IMR-90 (cell line): ENCODE measurements at regions of chr10 and their contacts with region 1.

Region 1: DNA sequence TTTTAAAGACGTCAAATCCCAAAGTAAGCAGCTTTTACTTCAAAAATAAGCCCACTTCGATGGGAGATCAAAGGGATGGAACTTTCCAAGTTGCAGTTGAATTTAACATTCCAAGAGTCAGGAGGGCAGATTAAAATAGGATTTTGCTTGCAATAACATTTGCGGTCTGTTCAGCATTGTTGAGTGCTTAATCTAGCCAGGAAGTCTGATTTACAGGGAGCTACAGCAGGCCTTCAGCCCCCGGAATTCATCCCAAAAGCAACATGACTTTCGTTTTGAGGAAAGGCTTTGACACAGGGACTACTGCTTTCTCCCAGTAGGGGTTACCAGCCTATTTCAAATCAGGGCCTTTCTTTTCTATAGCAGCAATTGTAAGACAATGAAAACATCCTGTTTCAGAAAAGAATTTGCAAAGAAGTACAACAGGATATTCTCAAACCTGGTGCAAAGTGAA is 279.6 kb upstream of the PITRM1 start:
- DNase-seq: peak; percentile 97
- ATAC-seq: peak; percentile 92
- H3K4me3 ChIP-seq: peak overlapping the region; percentile 17; the same call in 1 of the 2 replicates
- H3K27ac ChIP-seq: peak overlapping the region; percentile 95; the same call in 1 of the 2 replicates
- H3K4me1 ChIP-seq: peaks cover 13% of the 10 kb centered on the region
- H3K27me3 ChIP-seq: no peaks in the 10 kb centered on the region
- CTCF ChIP-seq: peak; percentile 68
- POLR2A ChIP-seq: 0 out of 2 replicates have a peak, but pooled peaks have one; percentile 37
- RAD21 ChIP-seq: peak; percentile 75

Region 2: GRCh38 chr10:3239066-3239919 is 212.9 kb before region 1 on chr10:
- CTCF ChIA-PET with region 1: no interaction called
- POLR2A ChIA-PET with region 1: no interaction called
- dilution Hi-C with region 1: no loop called
- in situ Hi-C with region 1: no loop called
- intact Hi-C with region 1: loop called (anchors 2 kb)
- DNase-seq: peak; percentile 68
- ATAC-seq: peak; percentile 94
- H3K4me3 ChIP-seq: no peak overlapping the region
- H3K27ac ChIP-seq: peak overlapping the region; percentile 77; the same call in 1 of the 2 replicates
- H3K4me1 ChIP-seq: peaks cover 9% of the 10 kb centered on the region; the same call in 1 of the 2 replicates
- H3K27me3 ChIP-seq: no peaks in the 10 kb centered on the region
- CTCF ChIP-seq: peak; percentile 91
- POLR2A ChIP-seq: 0 out of 2 replicates have a peak, but pooled peaks have one; percentile 25
- RAD21 ChIP-seq: peak; percentile 99

Region 3: GRCh38 chr10:3514691-3515090 is 62.5 kb after region 1 on chr10:
- CTCF ChIA-PET with region 1: no interaction called
- POLR2A ChIA-PET with region 1: no interaction called
- dilution Hi-C with region 1: no loop called
- in situ Hi-C with region 1: no loop called
- intact Hi-C with region 1: no loop called
- DNase-seq: no peak
- ATAC-seq: no peak
- H3K4me3 ChIP-seq: no peak overlapping the region
- H3K27ac ChIP-seq: no peak overlapping the region
- H3K4me1 ChIP-seq: no peaks in the 10 kb centered on the region
- H3K27me3 ChIP-seq: no peaks in the 10 kb centered on the region; the same call in 1 of the 2 replicates
- CTCF ChIP-seq: no peak
- POLR2A ChIP-seq: no peak
- RAD21 ChIP-seq: no peak

Region 4: DNA sequence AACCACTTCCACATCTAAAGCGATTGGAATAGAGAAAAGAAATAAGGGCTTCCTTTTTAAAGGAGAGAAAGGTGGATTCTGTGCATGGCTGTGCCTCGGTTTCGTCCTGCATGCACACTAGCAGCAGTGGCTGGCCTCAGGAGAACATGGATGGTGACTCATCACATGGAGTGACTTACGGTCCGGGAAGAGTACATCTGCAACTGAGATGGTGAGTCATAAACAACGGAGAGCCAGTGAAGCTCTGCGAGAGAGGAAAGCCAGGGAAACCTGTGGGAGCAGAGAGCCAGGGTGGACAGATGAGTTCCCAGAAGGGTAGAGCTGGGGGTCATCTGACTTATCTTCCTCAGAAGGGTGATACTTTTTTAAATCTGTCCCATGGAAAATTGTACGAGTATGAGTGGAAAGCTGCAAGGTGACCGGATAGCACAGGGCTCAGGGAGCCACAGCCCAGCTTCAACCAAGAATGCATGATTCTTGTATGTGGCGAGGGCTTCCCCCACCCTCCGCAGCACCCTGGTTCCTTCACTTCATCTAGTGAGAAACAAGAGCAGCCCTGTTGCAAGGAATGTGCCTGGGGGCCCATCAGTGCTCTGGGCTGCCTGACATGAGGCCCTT is 73.7 kb after region 1 on chr10:
- CTCF ChIA-PET with region 1: interaction called, 3 read pairs
- POLR2A ChIA-PET with region 1: no interaction called
- dilution Hi-C with region 1: no loop called
- in situ Hi-C with region 1: no loop called
- intact Hi-C with region 1: loop called (anchors 5 kb)
- DNase-seq: peak; percentile 99
- ATAC-seq: peak; percentile 97
- H3K4me3 ChIP-seq: no peak overlapping the region
- H3K27ac ChIP-seq: peak overlapping the region; percentile 49
- H3K4me1 ChIP-seq: peaks cover 14% of the 10 kb centered on the region
- H3K27me3 ChIP-seq: no peaks in the 10 kb centered on the region
- CTCF ChIP-seq: no peak
- POLR2A ChIP-seq: no peak
- RAD21 ChIP-seq: peak; percentile 39

Region 5: GRCh38 chr10:3538658-3539531 is 86.7 kb after region 1 on chr10:
- CTCF ChIA-PET with region 1: no interaction called
- POLR2A ChIA-PET with region 1: no interaction called
- dilution Hi-C with region 1: no loop called
- in situ Hi-C with region 1: no loop called
- intact Hi-C with region 1: no loop called
- DNase-seq: peak; percentile 97
- ATAC-seq: peak; percentile 86
- H3K4me3 ChIP-seq: peak overlapping the region; percentile 3; the same call in 1 of the 2 replicates
- H3K27ac ChIP-seq: peak overlapping the region; percentile 80
- H3K4me1 ChIP-seq: peaks cover 22% of the 10 kb centered on the region
- H3K27me3 ChIP-seq: no peaks in the 10 kb centered on the region
- CTCF ChIP-seq: no peak
- POLR2A ChIP-seq: no peak
- RAD21 ChIP-seq: no peak

Region 6: GRCh38 chr10:3776796-3777571 is 324.8 kb after region 1 on chr10:
- CTCF ChIA-PET with region 1: no interaction called
- POLR2A ChIA-PET with region 1: interaction called, 3 read pairs
- dilution Hi-C with region 1: no loop called
- in situ Hi-C with region 1: no loop called
- intact Hi-C with region 1: loop called (anchors 1 kb)
- DNase-seq: peak; percentile 94
- ATAC-seq: peak; percentile 21
- H3K4me3 ChIP-seq: no peak overlapping the region
- H3K27ac ChIP-seq: peak overlapping the region; percentile 90
- H3K4me1 ChIP-seq: peaks cover 32% of the 10 kb centered on the region
- H3K27me3 ChIP-seq: no peaks in the 10 kb centered on the region
- CTCF ChIP-seq: no peak
- POLR2A ChIP-seq: no peak; the same call in none of the 2 replicates
- RAD21 ChIP-seq: no peak